ENCODE measurements at regions of chr6 and their contacts with region 1.

Region 1: DNA sequence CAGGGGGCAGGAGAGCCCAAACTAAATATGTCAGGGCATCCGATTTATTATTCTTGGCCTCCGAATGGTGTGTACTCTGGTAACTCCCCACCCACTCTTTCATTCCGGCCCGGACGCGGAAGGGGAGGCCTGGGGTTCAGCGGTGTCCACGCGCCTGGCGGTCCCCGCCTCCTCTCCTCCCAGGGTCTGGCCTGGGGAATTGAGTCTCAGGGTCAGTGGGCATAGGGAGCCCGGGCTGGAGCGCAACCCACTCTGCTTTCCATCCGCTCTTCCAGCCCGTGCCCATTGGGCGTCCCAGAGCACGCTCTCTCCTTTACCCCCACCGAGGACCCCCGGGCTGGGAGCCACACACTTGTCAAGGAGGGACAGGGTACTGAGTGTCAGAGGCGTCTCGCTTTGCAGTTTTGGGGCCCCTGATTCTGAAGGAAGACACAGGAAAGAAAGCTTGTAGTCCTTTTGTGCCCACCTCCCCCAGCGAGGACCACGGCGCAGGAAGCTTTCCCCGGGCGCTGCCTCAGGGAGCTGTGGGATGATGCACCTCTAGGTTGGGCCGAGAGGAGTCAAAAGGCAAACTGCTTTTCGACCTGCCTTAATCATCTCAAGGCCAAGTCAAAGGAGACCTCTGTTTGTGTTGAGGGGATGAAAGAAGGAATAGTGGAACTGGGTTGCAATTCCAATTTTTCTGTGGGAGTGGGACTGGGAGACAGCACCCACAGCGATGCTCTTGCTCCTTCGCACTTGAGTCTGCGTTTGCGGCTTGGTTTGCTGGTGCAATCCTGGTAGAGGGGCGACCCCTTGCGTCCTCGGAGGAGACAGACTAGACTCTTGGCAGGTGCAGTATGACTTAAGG is 2.5 kb downstream of the RSPO3 start:
- DNase-seq: peak; percentile 85
- H3K4me3 ChIP-seq: peak overlapping the region in 1 of 2 donors; percentile 51
- H3K27ac ChIP-seq: no peak overlapping the region
- H3K4me1 ChIP-seq: peaks cover 16% of the 10 kb centered on the region
- H3K27me3 ChIP-seq: no peaks in the 10 kb centered on the region
- CTCF ChIP-seq: peak; percentile 44 to 60 (median 50)
- POLR2A ChIP-seq: no peak

Region 2: GRCh38 chr6:127266178-127266891 is 145.3 kb after region 1 on chr6 and contains the start of gene RNF146:
- intact Hi-C with region 1: loop called (anchors 10 kb)
- DNase-seq: peak; percentile 91
- H3K4me3 ChIP-seq: peak within 1 kb of the TSS; percentile 92 to 99
- H3K27ac ChIP-seq: peak within 1 kb of the TSS; percentile 100
- H3K4me1 ChIP-seq: peaks cover 4% of the 10 kb centered on the region
- H3K27me3 ChIP-seq: no peaks in the 10 kb centered on the region
- CTCF ChIP-seq: peak; percentile 68 to 86 (median 73)
- POLR2A ChIP-seq: peak; percentile 76
- total RNA-seq, gene RNF146: 52.7 to 66.3 TPM

Measured in testis (tissue), 5 donors.